Right ventricle myocardium superior (tissue), 1 donor: ENCODE measurements at regions of chr15 and their contacts with region 1.

Region 1: GRCh38 chr15:34437687-34438086 is at the start of gene GOLGA8A:
- DNase-seq: peak; percentile 76
- ATAC-seq: peak; percentile 61
- total RNA-seq, gene GOLGA8A: 14.3 TPM

Region 2: GRCh38 chr15:34496207-34496995 is 58.7 kb after region 1 on chr15:
- intact Hi-C with region 1: no loop called
- DNase-seq: no peak
- ATAC-seq: peak; percentile 38

Region 3: DNA sequence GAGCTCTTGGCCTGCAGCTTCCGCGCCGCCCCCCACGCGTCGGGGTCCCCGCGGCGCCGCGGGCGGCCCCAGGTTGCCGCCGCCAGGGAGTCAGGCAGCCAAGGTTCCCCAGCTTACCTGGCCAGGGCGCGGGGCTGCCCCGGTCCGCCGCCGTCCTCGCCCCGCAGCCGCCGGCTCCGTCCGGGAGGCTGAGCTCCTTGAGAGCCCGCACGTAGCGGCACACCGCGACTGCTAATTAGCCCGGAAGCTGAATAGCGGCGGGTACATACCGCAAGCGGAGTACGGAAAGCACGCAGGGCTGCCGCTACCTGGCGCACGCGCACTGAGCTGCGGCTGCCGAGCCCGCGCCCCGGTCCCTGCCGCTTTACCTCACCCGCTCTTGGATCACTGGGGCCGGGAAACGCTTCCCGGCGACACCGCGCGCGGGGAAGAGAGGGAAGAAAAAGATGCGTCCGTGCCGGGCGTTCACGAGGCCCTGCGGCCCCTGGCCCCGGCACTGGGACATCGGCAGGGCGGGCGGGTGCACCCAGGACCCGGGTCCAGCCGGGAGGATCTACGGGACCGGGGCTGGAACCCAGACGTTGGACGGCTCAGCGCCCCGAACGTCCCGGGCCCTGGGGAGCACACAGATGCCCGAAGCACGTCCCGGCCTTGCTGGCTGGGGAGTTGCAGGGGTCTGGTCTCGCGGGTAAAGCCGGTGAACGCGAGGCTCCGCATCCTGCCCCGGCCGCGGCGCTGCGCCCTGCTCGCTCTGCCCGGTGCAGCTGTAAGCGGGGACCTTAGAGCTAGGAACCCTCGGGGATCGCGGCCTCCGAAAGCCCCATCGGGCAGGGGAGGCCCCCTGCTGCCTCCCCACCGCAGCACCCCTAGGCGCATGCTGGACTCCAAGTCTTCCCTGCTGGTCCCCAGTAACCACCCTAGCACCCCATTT is 146.0 kb after region 1 on chr15 and contains the start of gene GOLGA8B:
- intact Hi-C with region 1: loop called (anchors 5 kb)
- DNase-seq: peak; percentile 73
- ATAC-seq: peak; percentile 81
- total RNA-seq, gene GOLGA8B: 9.1 TPM

Region 4: DNA sequence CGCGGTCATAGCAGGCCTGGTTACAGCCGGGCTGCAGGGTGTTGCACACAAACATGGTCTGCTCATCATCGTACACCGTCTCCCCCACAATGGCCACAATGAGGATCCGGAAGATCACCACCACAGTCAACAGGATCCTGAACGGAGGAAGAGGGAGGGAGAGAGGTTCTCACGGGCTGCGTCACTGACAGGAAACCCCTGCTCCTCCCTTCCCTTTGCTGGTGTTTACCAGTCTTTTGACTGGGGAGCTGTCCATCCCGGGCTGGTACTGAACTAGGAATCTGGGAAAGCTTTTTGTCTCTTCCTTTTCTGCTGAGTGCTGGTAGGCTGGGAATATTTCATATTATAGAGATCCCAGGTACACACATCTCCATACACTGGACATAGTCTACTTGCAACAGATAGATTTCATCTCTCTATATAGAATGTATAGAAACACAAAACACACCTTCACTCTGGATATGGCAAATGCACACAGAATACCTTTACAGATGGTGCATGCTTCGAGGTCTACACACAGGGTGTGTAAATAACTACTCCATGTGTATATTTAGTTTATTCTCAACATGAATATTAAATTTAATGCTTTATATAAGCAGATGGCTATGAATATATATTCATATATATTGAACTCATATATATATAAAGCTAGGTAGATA is 315.7 kb after region 1 on chr15:
- intact Hi-C with region 1: no loop called
- DNase-seq: no peak
- ATAC-seq: peak; percentile 65

Region 5: GRCh38 chr15:35061825-35062737 is 624.4 kb after region 1 on chr15:
- intact Hi-C with region 1: no loop called
- DNase-seq: no peak
- ATAC-seq: no peak